Pancreas (tissue), 10 donors: ENCODE measurements at regions of chr5 and their contacts with region 1.

Region 1: DNA sequence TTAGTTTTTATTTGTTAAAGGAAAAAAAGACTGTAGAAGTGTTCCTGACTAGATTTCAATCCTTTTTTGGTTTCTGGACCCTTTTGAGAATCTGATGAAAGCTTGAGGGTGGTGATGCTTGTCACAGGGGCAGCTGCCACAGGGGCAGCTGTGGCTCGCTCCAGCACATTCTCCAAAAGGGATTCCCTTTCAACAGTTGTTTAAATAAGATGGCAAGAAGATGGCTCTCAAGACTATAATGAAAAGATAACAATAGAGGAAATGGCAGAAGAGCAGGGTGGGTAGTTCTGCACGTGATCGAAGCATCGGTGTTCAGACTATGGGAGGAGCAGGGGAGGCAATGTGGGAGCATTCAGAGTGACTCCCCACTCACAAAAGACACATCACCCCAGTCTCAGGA is 46.5 kb upstream of the TNFAIP8 start:
- DNase-seq: no peak
- ATAC-seq: no peak
- H3K4me3 ChIP-seq: no peak overlapping the region
- H3K27ac ChIP-seq: no peak overlapping the region
- H3K4me1 ChIP-seq: peaks cover 0 to 15% (median 12%) of the 10 kb centered on the region in 3 donors
- H3K27me3 ChIP-seq: no peaks in the 10 kb centered on the region
- CTCF ChIP-seq: no peak

Region 2: DNA sequence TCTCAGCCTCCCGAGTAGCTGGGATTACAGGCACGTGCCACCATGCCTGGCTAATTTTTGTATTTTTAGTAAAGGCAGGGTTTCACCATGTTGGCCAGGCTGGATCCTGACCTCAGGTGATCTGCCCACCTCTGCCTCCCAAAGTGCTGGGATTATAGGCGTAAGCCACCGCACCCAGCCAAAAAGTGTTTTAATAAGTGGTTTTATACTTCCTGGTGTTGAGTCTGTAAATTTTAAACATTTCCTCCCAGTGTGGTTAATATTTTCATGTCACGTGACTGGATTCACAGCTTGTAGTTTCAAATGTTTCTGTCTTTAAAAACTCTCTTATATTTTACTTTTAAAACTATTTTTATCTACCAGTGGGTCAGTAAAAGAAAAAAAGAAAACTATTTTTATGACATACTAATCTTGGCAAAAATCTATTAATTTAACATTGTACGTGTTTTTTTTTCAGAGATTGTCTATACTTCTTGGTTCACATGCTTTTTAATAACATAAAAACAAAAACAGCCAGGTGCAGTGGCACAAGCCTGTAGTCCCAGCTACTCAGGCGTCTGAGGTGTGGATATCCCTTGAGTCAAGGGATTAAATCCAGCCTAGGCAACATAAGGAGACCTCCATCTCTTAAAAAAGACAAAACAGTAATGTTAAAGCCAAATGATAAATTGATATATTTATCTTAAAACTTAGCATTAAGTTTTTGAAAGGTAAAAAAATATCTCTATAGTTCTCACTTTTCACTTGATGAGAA is 121.4 kb before region 1 on chr5:
- intact Hi-C with region 1: no loop called
- DNase-seq: no peak
- ATAC-seq: no peak
- H3K4me3 ChIP-seq: no peak overlapping the region
- H3K27ac ChIP-seq: no peak overlapping the region
- H3K4me1 ChIP-seq: no peaks in the 10 kb centered on the region
- H3K27me3 ChIP-seq: no peaks in the 10 kb centered on the region
- CTCF ChIP-seq: no peak

Region 3: GRCh38 chr5:119340597-119341218 is 31.4 kb after region 1 on chr5:
- intact Hi-C with region 1: loop called in 1 of 3 experiments (anchors 5 kb)
- DNase-seq: no peak
- ATAC-seq: peak in 1 of 4 donors; percentile 11
- H3K4me3 ChIP-seq: no peak overlapping the region
- H3K27ac ChIP-seq: no peak overlapping the region
- H3K4me1 ChIP-seq: peaks cover 0 to 21% (median 9%) of the 10 kb centered on the region in 3 donors
- H3K27me3 ChIP-seq: no peaks in the 10 kb centered on the region
- CTCF ChIP-seq: no peak